ENCODE measurements at regions of chr5 and their contacts with region 1.

Region 1: DNA sequence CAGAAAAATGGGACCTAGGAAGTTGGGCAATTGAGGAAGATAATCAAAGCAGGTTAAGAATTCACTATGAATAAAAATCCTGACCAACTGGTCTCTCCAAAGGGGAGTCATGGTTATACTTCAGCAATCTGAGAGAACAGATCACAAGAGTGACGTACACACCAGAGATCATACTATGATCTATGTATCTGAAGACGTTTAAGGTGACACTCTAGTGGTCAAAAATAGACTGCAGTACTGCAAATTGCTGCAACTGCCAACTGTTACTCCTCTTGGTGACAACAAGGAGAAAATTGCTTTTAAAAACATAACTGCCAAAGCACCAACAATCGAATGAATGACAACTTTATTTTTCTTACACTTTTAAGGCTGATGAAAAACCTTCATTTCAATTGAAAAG is 4.9 kb downstream of the AK6 start:
- DNase-seq: no peak
- ATAC-seq: peak; percentile 20 to 34 (median 29)
- H3K4me3 ChIP-seq: no peak overlapping the region
- H3K27ac ChIP-seq: no peak overlapping the region
- H3K4me1 ChIP-seq: peaks cover 19% of the 10 kb centered on the region
- H3K27me3 ChIP-seq: no peaks in the 10 kb centered on the region
- CTCF ChIP-seq: peak; percentile 46

Region 2: GRCh38 chr5:69105996-69106906 is 258.2 kb before region 1 on chr5:
- intact Hi-C with region 1: loop called in 1 of 2 experiments (anchors 5 kb)
- DNase-seq: no peak
- ATAC-seq: no peak
- H3K4me3 ChIP-seq: no peak overlapping the region
- H3K27ac ChIP-seq: no peak overlapping the region
- H3K4me1 ChIP-seq: no peaks in the 10 kb centered on the region
- H3K27me3 ChIP-seq: no peaks in the 10 kb centered on the region
- CTCF ChIP-seq: no peak